Activated naive CD4-positive, alpha-beta T cell treated with anti-CD3 and anti-CD28 coated beads for 36 hours (primary cell): ENCODE measurements at regions of chr5 and their contacts with region 1.

Region 1: DNA sequence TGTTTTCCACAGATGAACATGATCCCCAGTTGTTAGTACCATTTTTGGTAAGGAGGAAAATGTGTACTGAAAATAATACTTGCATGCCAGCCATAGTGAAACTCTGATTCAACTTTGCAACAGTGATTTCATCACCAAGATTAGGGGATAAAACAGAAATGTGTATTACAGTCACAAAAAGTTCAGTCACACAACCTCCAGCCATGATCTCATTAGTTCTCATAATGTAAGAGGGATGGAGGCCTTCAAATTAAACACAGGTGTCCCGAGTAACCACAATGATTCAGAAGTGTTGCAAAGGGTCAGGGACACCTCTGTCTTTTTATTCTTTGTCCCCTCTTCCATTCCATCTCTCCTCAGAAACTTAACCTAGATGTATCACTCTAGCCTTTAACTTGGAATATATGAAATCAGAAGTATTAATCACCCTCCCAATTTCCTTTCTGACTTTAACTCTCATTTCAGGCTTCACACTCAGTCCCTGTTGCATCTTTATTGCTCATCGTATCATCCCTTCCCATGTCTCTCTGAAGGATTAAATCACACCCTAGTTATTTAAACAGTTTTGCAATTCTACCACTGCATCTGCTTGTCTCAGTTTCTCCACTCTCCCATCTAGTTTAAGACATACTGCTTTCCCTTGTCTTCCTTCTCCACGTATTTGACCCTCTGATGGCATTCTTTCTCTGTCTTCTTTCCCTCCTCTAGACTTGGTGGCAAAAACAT is 291.2 kb downstream of the ADAMTS6 start:
- DNase-seq: peak; percentile 35
- H3K4me3 Mint-ChIP-seq: no peak overlapping the region
- H3K27ac Mint-ChIP-seq: peak overlapping the region; percentile 65
- H3K4me1 Mint-ChIP-seq: peaks cover 14% of the 10 kb centered on the region
- H3K27me3 Mint-ChIP-seq: peaks cover 9% of the 10 kb centered on the region

Region 2: GRCh38 chr5:64883912-64884311 is 306.6 kb before region 1 on chr5:
- CTCF ChIA-PET with region 1: no interaction called
- intact Hi-C with region 1: no loop called
- DNase-seq: no peak
- H3K4me3 Mint-ChIP-seq: no peak overlapping the region
- H3K27ac Mint-ChIP-seq: no peak overlapping the region
- H3K4me1 Mint-ChIP-seq: no peaks in the 10 kb centered on the region
- H3K27me3 Mint-ChIP-seq: no peaks in the 10 kb centered on the region

Region 3: DNA sequence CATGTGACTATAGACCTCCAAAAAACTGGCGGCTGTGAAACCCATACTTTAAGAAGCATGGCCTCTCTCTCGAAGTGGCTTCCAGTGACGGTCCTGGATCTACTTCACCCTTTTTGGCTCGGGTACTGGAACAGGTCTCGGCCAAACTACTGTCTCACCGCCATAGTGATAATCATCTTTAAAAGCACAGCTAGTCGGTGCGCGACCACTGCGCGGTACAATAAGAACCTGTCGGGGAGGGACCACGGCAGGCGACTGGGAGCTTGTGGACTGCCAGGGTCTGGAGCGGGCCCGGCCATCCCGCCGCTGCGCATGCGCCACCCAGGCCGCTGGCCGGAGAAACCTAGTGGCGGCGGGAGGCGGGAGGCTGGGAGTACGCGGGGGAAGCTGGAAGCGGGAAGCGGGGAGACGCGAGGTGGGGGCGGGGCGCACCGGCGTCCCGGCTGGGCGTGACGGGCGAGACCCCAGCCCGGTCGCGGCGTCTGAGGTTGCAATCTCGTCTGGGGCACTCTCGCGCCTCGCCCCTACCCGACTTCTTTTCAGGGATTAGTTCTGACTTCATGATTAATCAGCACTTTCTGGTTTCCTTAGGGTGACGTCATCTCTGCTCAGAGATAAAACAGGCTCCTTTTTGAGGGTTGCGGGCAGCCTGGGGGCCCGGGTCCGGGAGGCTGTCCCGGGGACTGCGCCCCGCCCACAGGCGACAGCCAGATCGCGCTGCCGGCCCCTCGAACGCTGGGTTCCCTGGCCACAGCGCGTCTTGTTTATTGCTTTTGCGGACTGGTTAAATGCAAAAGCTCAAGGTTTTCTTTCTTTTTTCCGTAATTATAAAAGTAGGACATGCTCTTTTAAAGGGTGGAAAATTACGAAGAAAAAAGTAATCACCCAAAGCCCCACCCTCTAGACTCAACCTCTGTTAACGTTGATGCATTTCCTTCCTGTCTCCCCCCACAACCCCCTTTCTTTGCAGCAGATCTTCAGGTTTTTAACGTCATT is 155.0 kb before region 1 on chr5:
- CTCF ChIA-PET with region 1: no interaction called
- intact Hi-C with region 1: loop called (anchors 1 kb)
- DNase-seq: peak; percentile 80
- H3K4me3 Mint-ChIP-seq: peak overlapping the region; percentile 69
- H3K27ac Mint-ChIP-seq: peak overlapping the region; percentile 85
- H3K4me1 Mint-ChIP-seq: peaks cover 27% of the 10 kb centered on the region
- H3K27me3 Mint-ChIP-seq: no peaks in the 10 kb centered on the region

Region 4: GRCh38 chr5:65172486-65173129 is 17.9 kb before region 1 on chr5:
- CTCF ChIA-PET with region 1: no interaction called
- intact Hi-C with region 1: loop called (anchors 1 kb)
- DNase-seq: peak; percentile 76
- H3K4me3 Mint-ChIP-seq: no peak overlapping the region
- H3K27ac Mint-ChIP-seq: no peak overlapping the region
- H3K4me1 Mint-ChIP-seq: peaks cover 9% of the 10 kb centered on the region
- H3K27me3 Mint-ChIP-seq: no peaks in the 10 kb centered on the region

Region 5: DNA sequence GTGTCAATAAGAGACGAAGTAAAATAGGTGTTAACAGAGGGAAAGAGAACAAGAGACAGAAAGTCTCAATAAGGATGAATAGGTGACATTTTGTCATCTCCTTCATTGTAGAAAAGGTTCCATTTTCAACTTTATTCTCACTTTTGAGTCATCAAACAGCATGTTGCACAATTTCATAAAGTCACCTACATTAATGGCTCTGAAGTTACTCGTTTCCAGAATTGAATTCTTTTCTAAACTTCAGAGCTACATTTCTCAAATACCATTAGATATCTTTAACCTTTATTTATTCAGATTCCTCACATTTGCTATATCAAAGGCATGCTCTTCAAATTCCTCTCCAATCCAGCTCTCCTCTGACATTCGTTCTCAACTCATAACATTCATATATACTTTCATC is 278.1 kb after region 1 on chr5:
- CTCF ChIA-PET with region 1: no interaction called
- intact Hi-C with region 1: loop called (anchors 1 kb)
- DNase-seq: no peak
- H3K4me3 Mint-ChIP-seq: no peak overlapping the region
- H3K27ac Mint-ChIP-seq: no peak overlapping the region
- H3K4me1 Mint-ChIP-seq: peaks cover 2% of the 10 kb centered on the region
- H3K27me3 Mint-ChIP-seq: no peaks in the 10 kb centered on the region

Region 6: DNA sequence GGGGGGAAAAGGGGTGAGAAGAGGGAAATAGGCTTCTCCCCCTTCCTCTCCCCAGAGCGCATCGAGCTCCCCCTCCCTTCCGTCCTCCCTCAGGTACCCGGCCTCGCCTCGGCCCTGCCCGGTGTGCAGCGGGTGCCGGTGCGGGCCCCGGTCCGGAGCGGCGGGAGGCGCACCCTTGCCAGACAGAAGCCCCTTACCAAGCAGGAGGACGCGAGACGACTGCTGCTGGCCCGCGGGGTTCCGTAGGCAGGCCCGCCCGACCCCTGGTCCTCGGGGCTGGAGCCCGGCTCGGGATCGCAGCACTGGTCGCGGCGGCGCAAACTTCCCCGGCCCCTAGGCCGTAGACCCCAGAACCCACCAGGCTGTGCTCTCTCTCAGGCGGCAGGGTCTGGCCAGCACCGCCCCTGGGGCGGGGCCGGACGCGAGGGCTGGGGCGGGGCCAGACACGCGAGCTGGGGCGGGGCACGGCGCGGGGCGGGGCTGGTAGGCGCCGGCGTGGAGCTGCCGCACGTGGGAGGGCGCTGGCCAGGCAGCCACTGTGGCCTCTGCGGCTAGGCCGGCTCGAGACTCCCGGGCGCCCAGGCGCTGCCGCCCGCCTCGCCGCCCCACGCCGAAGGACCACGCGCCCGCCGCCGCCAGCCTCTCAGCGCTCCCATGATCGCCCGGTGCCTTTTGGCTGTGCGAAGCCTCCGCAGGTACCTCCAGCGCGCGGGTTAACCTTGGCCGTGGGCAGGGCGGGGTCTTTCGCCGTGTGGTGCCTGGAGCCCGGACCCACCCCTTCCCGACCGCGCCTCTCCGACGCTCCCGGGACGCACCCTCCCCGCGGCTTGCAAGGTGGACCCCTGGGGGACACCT is 531.5 kb after region 1 on chr5 and contains the starts of genes NLN and SGTB:
- CTCF ChIA-PET with region 1: no interaction called
- intact Hi-C with region 1: loop called (anchors 10 kb)
- DNase-seq: peak; percentile 80
- H3K4me3 Mint-ChIP-seq: peak within 1 kb of the TSS; percentile 88
- H3K27ac Mint-ChIP-seq: peak within 1 kb of the TSS; percentile 94
- H3K4me1 Mint-ChIP-seq: peaks cover 13% of the 10 kb centered on the region
- H3K27me3 Mint-ChIP-seq: no peaks in the 10 kb centered on the region
- total RNA-seq, gene NLN: 32.4 to 35.5 TPM
- total RNA-seq, gene SGTB: 16.1 to 17.3 TPM